PC-9 (cell line): ENCODE measurements at regions of chr7 and their contacts with region 1.

Region 1: GRCh38 chr7:55415173-55415778 is 50.1 kb downstream of the LANCL2 start:
- DNase-seq: peak; percentile 75 to 82
- H3K4me3 ChIP-seq: no peak overlapping the region
- H3K27ac ChIP-seq: no peak overlapping the region
- H3K4me1 ChIP-seq: no peaks in the 10 kb centered on the region
- H3K27me3 ChIP-seq: no peaks in the 10 kb centered on the region
- CTCF ChIP-seq: peak; percentile 100

Region 2: GRCh38 chr7:54758702-54759592 is 656.3 kb before region 1 on chr7 and contains the start of gene SEC61G:
- CTCF ChIA-PET with region 1: interaction called, 10 read pairs
- POLR2A ChIA-PET with region 1: no interaction called
- intact Hi-C with region 1: no loop called
- DNase-seq: peak; percentile 99
- H3K4me3 ChIP-seq: peak within 1 kb of the TSS; percentile 77
- H3K27ac ChIP-seq: peak within 1 kb of the TSS; percentile 77
- H3K4me1 ChIP-seq: peaks cover 20% of the 10 kb centered on the region
- H3K27me3 ChIP-seq: no peaks in the 10 kb centered on the region
- CTCF ChIP-seq: no peak
- total RNA-seq, gene SEC61G: 203 and 261 TPM in 2 replicates

Region 3: GRCh38 chr7:54773472-54774399 is 641.5 kb before region 1 on chr7:
- CTCF ChIA-PET with region 1: interaction called, 3 read pairs
- POLR2A ChIA-PET with region 1: no interaction called
- intact Hi-C with region 1: loop called (anchors 1 kb)
- DNase-seq: peak; percentile 94
- H3K4me3 ChIP-seq: peak overlapping the region; percentile 58
- H3K27ac ChIP-seq: peak overlapping the region; percentile 67
- H3K4me1 ChIP-seq: peaks cover 20% of the 10 kb centered on the region
- H3K27me3 ChIP-seq: no peaks in the 10 kb centered on the region
- CTCF ChIP-seq: peak; percentile 100

Region 4: DNA sequence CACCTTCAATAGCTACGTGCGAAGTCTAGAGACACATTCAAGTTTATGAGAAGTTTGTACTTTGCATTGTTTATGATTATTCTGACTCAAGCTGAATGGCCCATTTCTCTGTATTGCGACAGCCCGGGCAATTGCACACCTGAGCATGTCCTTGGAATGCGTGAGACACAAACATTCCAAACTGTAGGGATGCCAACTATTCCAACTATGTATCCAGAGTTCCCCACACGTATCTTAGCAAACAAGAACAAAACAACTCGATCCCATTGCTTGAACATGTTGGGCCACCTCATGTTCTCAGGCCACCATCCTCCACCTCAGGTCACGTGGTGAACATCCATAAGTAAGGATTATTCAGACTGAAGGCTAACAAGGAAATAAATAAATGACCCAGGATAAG is 447.9 kb before region 1 on chr7:
- CTCF ChIA-PET with region 1: no interaction called
- POLR2A ChIA-PET with region 1: no interaction called
- intact Hi-C with region 1: no loop called
- DNase-seq: peak; percentile 92 to 100
- H3K4me3 ChIP-seq: peak overlapping the region; percentile 2; the same call in 1 of the 2 replicates
- H3K27ac ChIP-seq: peak overlapping the region; percentile 89
- H3K4me1 ChIP-seq: peaks cover 50% of the 10 kb centered on the region
- H3K27me3 ChIP-seq: no peaks in the 10 kb centered on the region
- CTCF ChIP-seq: no peak

Region 5: GRCh38 chr7:55280031-55280454 is 135.2 kb before region 1 on chr7:
- CTCF ChIA-PET with region 1: interaction called, 12 read pairs
- POLR2A ChIA-PET with region 1: no interaction called
- intact Hi-C with region 1: loop called (anchors 1 kb)
- DNase-seq: peak; percentile 72 to 74
- H3K4me3 ChIP-seq: no peak overlapping the region
- H3K27ac ChIP-seq: no peak overlapping the region
- H3K4me1 ChIP-seq: no peaks in the 10 kb centered on the region
- H3K27me3 ChIP-seq: peaks cover 54% of the 10 kb centered on the region
- CTCF ChIP-seq: peak; percentile 99